GM18951 (cell line): ENCODE measurements at regions of chr11 and their contacts with region 1.

Region 1: GRCh38 chr11:76318744-76319384 is 62.1 kb downstream of the THAP12 start:
- POLR2A ChIP-seq: no peak

Region 2: GRCh38 chr11:75879737-75880136 is 439.1 kb before region 1 on chr11:
- in situ Hi-C with region 1: loop called (anchors 10 kb)
- POLR2A ChIP-seq: no peak

Region 3: GRCh38 chr11:76209973-76210930 is 108.6 kb before region 1 on chr11:
- in situ Hi-C with region 1: loop called (anchors 10 kb)
- POLR2A ChIP-seq: no peak

Region 4: DNA sequence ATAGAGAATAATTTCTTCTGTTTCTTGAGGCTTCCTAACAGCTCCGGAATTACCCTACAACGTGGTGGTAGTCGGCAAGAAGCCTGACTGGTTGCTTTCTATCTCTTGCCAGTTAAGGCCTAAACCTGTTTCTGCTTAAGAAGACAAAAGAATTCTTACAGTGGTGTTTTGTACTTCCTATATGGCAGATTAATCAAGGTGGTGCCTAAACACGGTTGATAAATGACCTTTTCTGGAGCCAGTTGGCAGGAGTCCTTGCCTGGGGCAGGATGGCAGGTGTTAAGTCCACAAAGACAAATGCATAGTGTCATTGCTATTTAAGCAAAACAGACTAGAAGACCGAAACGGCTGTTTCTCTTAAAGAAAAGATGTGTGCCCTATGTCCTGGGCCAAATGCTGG is 72.2 kb after region 1 on chr11:
- in situ Hi-C with region 1: no loop called
- POLR2A ChIP-seq: no peak